Naive thymus-derived CD8-positive, alpha-beta T cell (primary cell): ENCODE measurements at regions of chr9 and their contacts with region 1.

Region 1: GRCh38 chr9:33415501-33416038 is 13.2 kb upstream of the AQP7 start:
- DNase-seq: peak; percentile 84 to 97 (median 91)
- ATAC-seq: peak; percentile 89 to 92
- H3K4me3 Mint-ChIP-seq: peak overlapping the region; percentile 64 to 90 (median 82)
- H3K27ac Mint-ChIP-seq: peak overlapping the region; percentile 90 to 99 (median 98)
- H3K4me1 Mint-ChIP-seq: peaks cover 19 to 51% (median 45%) of the 10 kb centered on the region in 4 donors
- H3K27me3 Mint-ChIP-seq: peaks cover 0 to 1% (median 0%) of the 10 kb centered on the region in 5 donors

Region 2: GRCh38 chr9:33139421-33140228 is 275.9 kb before region 1 on chr9:
- POLR2A ChIA-PET with region 1: no interaction called
- DNase-seq: no peak
- ATAC-seq: no peak
- H3K4me3 Mint-ChIP-seq: peak overlapping the region in 9 of 10 donors; percentile 33 to 78 (median 61)
- H3K27ac Mint-ChIP-seq: peak overlapping the region; percentile 86 to 99 (median 91)
- H3K4me1 Mint-ChIP-seq: peaks cover 51 to 98% (median 96%) of the 10 kb centered on the region in 4 donors
- H3K27me3 Mint-ChIP-seq: no peaks in the 10 kb centered on the region

Region 3: DNA sequence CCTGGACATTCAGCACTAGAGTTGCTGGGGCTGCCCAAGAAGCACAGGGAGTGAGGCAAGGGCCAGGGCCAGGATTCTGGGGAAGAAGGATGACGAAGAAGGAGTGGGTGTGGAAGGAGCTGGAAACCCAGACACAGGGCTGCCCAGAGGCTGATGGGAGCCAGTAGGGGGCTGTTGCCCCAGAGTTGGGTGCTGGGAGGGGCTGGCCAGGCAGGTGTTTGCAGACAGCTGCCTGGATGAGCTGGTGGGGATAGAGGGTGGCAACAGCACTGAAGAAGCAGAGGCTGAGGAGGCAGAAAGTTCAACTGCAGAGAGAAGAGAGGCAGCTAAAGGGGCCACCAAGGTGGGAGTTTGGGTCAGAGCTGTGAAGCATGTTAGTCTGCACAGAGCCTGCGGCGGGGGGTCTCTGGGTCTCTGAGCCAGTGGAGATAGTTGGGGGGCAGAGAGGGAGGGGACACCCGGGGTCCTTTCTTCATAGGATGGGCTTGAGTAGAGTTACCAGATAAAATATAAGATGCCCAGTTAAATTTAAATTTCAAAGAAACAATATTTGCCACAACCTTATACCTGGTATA is 10.7 kb before region 1 on chr9:
- POLR2A ChIA-PET with region 1: interaction called, 14 read pairs
- DNase-seq: no peak
- ATAC-seq: no peak
- H3K4me3 Mint-ChIP-seq: no peak overlapping the region
- H3K27ac Mint-ChIP-seq: peak overlapping the region in 9 of 10 donors; percentile 32 to 88 (median 60)
- H3K4me1 Mint-ChIP-seq: peaks cover 3 to 8% (median 4%) of the 10 kb centered on the region in 4 donors
- H3K27me3 Mint-ChIP-seq: no peaks in the 10 kb centered on the region

Region 4: GRCh38 chr9:33446946-33447798 is 31.6 kb after region 1 on chr9 and contains the start of gene AQP3:
- POLR2A ChIA-PET with region 1: interaction called, 78 read pairs
- DNase-seq: peak; percentile 56 to 85 (median 68)
- ATAC-seq: peak; percentile 50 to 70
- H3K4me3 Mint-ChIP-seq: peak within 1 kb of the TSS; percentile 90 to 99 (median 95)
- H3K27ac Mint-ChIP-seq: peak within 1 kb of the TSS; percentile 92 to 98 (median 96)
- H3K4me1 Mint-ChIP-seq: peaks cover 25 to 72% (median 52%) of the 10 kb centered on the region in 4 donors
- H3K27me3 Mint-ChIP-seq: no peaks in the 10 kb centered on the region
- polyA plus RNA-seq, gene AQP3: 124 to 166 (median 145) TPM

Region 5: GRCh38 chr9:33452828-33453271 is 37.3 kb after region 1 on chr9:
- POLR2A ChIA-PET with region 1: interaction called, 78 read pairs
- DNase-seq: peak in 8 of 10 donors; percentile 20 to 40 (median 33)
- ATAC-seq: peak; percentile 58 to 71
- H3K4me3 Mint-ChIP-seq: peak overlapping the region in 6 of 10 donors; percentile 23 to 71 (median 50)
- H3K27ac Mint-ChIP-seq: peak overlapping the region; percentile 84 to 95 (median 90)
- H3K4me1 Mint-ChIP-seq: peaks cover 36 to 75% (median 65%) of the 10 kb centered on the region in 4 donors
- H3K27me3 Mint-ChIP-seq: no peaks in the 10 kb centered on the region

Region 6: GRCh38 chr9:33458444-33458843 is 42.9 kb after region 1 on chr9:
- POLR2A ChIA-PET with region 1: interaction called, 33 read pairs
- DNase-seq: peak in 9 of 10 donors; percentile 17 to 79 (median 41)
- ATAC-seq: peak; percentile 78 to 88
- H3K4me3 Mint-ChIP-seq: peak overlapping the region; percentile 53 to 86 (median 76)
- H3K27ac Mint-ChIP-seq: peak overlapping the region; percentile 87 to 98 (median 94)
- H3K4me1 Mint-ChIP-seq: peaks cover 29 to 74% (median 56%) of the 10 kb centered on the region in 4 donors
- H3K27me3 Mint-ChIP-seq: no peaks in the 10 kb centered on the region

Region 7: DNA sequence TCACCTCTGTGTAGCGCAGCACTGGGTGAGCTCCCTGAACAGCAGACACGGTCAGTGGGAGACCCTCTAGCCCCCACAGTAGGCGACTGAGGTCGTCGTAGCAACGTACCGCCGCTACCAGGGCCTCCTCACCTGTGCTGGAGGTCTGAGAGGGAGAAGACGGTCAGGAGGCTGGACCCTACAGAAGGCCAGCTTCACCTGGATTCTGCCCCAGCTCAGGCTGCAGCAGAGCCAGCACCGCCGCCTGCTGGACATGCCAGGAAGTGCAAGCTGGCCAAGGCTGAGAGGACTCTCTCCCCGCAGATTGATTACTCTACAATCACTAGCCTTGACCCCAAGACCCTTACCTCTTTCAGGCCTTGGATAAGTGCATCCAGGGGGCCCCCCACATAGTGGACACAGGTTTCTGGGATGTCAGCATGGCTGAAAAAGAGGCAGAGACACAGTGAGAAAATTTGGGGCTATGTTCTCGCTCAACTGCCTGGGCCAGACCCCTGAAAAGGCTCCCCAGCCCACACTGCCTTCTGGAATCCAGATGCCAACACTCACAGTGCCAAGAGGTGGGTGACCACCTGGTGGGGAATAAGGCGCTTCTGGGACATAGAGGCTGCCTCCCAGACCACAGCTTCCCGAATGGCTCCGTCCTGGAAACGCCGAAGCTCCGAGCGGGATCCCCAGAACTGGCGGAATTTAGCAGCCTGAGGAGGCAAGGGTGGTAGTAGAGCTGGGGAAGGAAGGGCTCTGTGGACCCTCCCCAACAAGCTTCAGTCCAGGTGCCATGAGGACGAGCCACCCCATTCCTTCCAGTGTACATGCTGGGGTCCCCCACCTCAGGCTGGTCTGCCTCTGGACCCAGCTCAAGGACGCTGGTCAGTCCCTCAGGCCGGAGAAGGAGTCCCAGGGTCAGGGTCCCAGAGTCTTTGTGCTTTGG is 51.3 kb after region 1 on chr9:
- POLR2A ChIA-PET with region 1: interaction called, 15 read pairs
- DNase-seq: peak; percentile 34 to 81 (median 70)
- ATAC-seq: peak; percentile 80 to 88
- H3K4me3 Mint-ChIP-seq: no peak overlapping the region
- H3K27ac Mint-ChIP-seq: peak overlapping the region; percentile 19 to 82 (median 57)
- H3K4me1 Mint-ChIP-seq: peaks cover 6 to 18% (median 8%) of the 10 kb centered on the region in 4 donors
- H3K27me3 Mint-ChIP-seq: no peaks in the 10 kb centered on the region

Region 8: DNA sequence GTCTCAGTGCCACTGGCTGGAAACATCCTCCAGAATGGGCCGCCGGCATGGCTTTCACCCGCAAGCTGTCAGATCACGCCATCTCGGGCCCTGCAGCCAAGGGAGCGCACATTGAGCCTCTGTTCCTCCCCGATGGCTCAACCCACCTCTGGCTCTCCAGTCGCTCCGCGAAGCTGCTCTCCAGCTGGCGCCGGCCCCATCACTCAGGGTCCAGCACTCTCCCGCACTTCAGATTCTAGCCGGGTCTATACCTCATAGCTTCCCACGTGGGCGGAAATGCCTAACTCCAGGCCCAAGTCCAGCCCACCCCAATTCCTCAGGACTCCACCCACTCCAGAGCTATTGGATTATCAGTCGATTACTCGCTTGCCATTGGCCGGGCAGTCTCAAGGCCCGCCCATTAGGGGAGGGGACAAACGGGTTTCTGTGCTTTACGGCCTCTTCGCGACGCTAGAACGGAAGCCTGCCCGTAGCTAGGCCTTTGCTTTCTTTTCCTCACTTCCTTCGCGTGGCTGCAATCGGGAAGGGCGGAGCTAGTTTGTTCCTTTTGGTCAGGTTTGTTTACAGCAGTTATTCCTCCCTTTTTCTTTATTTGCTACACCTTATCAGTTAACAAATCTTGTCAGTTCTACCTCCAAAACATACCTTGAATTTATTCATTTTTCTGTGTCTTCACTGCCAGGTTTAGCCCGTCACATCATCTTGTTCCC is 58.2 kb after region 1 on chr9 and contains the start of gene NOL6:
- POLR2A ChIA-PET with region 1: interaction called, 32 read pairs
- DNase-seq: peak; percentile 85 to 99 (median 98)
- ATAC-seq: peak; percentile 99
- H3K4me3 Mint-ChIP-seq: peak within 1 kb of the TSS; percentile 90 to 100 (median 98)
- H3K27ac Mint-ChIP-seq: peak within 1 kb of the TSS; percentile 91 to 98 (median 97)
- H3K4me1 Mint-ChIP-seq: peaks cover 10 to 35% (median 28%) of the 10 kb centered on the region in 4 donors
- H3K27me3 Mint-ChIP-seq: no peaks in the 10 kb centered on the region
- polyA plus RNA-seq, gene NOL6: 13.5 to 29.2 (median 19.3) TPM